OCI-LY7 (cell line): ENCODE measurements at regions of chr1 and their contacts with region 1.

Region 1: DNA sequence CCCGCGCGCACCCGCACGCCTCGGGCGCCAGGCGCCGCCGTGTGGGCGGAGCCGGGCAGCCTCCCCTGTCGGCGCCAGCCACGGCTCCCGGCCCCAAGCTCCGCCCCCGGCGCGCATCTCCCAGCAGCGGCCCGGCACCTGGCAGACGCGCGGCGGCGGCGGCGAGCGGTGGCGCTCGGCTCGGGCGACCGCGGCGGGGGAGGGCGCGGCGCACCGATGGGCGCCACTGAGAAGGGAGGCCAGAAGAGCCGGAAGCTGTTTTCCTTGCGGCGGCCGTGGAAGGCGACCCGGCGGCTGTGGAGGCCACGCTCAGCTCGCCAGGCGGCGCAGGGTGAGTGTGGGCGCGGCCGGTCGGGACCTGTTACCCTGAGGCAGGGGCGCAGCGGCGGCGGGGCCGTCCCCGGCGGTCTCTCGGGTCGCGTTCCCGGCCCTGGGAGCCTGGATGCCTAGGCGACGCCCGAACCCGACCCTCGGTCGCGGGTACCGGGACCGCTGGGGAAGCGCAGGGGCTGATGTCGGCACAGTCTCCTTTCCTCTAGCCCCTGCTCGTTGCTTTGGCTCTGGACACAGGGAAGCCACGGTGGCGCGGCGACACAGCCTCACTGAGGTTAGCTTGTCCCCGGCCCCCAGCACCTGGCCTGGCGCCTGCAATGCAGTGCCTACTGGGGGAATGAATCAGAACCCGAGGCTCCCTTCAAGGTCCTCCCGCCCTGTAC is 54.9 kb upstream of the DNAJC6 start:
- DNase-seq: peak; percentile 91
- H3K4me3 ChIP-seq: peak overlapping the region; percentile 86
- H3K27ac ChIP-seq: peak overlapping the region; percentile 47
- H3K4me1 ChIP-seq: peaks cover 21% of the 10 kb centered on the region
- CTCF ChIP-seq: 0 out of 2 replicates have a peak, but pooled peaks have one; percentile 11

Region 2: DNA sequence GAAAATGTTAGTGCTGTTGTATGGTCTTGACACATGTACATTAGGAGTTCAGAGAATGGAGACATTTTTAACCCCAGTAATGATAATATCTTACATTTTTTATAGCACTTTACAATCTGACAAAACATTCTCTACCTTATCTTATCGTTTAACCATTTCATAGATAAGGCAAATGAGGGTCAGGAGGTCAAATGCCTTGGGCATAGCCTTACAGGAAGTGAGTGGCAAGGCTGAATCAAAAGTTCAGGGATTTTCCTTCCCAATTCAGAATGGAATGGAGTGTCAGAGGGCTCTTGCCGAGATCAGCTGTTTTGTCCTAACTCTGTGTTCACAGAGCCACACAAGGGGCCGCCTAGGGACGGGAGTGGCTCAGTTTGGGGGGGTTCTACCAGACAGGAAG is 164.1 kb before region 1 on chr1:
- CTCF ChIA-PET with region 1: no interaction called
- POLR2A ChIA-PET with region 1: no interaction called
- intact Hi-C with region 1: no loop called
- DNase-seq: no peak
- H3K4me3 ChIP-seq: no peak overlapping the region
- H3K27ac ChIP-seq: no peak overlapping the region
- H3K4me1 ChIP-seq: no peaks in the 10 kb centered on the region
- CTCF ChIP-seq: no peak

Region 3: GRCh38 chr1:65174585-65174984 is 79.9 kb before region 1 on chr1:
- CTCF ChIA-PET with region 1: no interaction called
- POLR2A ChIA-PET with region 1: no interaction called
- intact Hi-C with region 1: no loop called
- DNase-seq: no peak
- H3K4me3 ChIP-seq: no peak overlapping the region
- H3K27ac ChIP-seq: no peak overlapping the region
- H3K4me1 ChIP-seq: no peaks in the 10 kb centered on the region
- CTCF ChIP-seq: no peak

Region 4: GRCh38 chr1:65281846-65282245 is 27.4 kb after region 1 on chr1:
- CTCF ChIA-PET with region 1: no interaction called
- POLR2A ChIA-PET with region 1: interaction called, 3 read pairs
- intact Hi-C with region 1: loop called (anchors 2 kb)
- DNase-seq: peak; percentile 79
- H3K4me3 ChIP-seq: peak overlapping the region; percentile 34
- H3K27ac ChIP-seq: peak overlapping the region; percentile 76
- H3K4me1 ChIP-seq: peaks cover 60% of the 10 kb centered on the region
- CTCF ChIP-seq: no peak

Region 5: DNA sequence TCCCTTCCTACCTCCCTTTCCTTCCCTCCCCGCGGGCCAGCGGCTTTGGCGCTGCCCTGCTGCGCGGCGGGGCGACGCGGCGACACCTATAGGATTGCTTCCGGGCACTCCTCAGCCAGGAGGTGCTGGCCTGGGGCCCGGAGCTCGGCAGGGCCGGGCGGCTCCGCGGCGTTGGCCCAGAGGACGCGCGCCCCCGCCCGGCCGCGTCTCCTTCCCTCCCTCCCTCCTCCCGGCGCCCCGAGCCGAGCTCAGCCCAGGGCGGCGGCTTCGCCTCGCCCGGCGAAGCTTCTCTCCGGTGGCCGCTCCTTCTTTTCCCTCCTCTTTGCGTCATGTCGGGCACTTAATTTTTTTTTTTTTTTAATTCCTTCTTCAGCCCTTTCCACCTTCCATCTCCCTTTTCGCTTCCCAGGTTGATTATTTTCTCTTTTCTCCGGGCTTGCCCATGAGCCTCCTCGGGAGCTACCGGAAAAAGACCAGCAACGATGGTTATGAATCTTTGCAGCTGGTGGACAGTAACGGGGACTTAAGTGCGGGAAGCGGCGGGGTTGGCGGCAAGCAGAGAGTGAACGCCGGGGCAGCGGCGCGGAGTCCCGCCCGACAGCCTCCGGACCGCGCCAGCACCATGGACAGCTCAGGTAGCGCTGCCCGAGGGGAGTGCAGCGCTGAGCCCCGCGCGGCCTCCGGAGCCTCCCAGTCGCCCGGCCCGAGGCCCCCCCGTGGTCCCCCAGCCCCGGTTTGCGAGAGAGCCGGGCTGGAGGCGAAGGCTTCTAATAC is 55.0 kb after region 1 on chr1 and contains the start of gene DNAJC6:
- CTCF ChIA-PET with region 1: no interaction called
- POLR2A ChIA-PET with region 1: no interaction called
- intact Hi-C with region 1: loop called (anchors 5 kb)
- DNase-seq: no peak
- H3K4me3 ChIP-seq: no peak within 1 kb of the TSS
- H3K27ac ChIP-seq: no peak within 1 kb of the TSS
- H3K4me1 ChIP-seq: no peaks in the 10 kb centered on the region
- CTCF ChIP-seq: no peak
- total RNA-seq, gene DNAJC6: 6.6 and 10.3 TPM in 2 replicates

Region 6: DNA sequence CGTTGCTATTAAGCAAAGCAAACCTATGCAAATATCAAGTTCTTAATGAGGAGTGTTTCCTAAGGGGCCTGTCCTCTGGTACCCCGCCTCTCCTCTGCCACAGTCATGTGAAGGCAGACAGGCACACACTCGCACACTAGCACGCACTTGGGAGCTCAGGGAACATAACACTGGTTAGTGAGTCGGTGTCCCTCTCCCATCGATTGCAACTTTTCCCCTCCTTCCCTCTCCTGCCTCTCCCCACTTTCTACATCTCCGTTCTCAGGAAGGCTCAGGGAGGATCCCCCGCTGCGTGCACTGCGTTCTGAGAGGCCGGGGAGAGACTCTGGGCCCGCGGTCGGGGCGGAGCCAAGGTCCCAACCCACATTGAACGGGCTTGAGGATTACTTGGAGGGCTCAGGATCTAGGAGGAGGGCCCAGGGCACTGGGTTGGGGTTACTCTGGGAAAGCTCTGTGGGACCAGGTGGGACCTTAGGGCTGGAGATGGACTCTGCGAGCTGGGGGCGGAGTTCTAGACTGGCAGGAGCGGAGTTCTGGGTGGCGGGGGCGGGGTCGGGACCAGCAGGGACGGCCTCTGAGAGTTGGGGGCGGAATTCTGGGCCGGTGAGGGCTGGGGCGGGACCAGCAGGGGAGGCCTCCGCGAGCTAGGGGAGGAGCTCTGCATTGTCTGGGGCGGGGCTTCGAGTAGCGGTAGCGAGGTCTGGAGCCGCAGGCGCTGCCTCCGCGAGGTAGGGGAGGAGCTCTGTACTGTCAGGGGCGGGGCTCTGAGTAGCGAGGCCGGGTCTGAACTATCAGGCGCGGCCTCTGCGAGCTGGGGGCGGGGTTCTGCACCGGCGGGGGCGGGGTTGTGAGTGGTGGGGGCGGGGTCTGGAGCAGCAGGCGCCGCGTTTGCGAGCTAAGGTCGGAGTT is 165.5 kb after region 1 on chr1:
- CTCF ChIA-PET with region 1: no interaction called
- POLR2A ChIA-PET with region 1: interaction called, 5 read pairs
- intact Hi-C with region 1: loop called (anchors 1 kb)
- DNase-seq: peak; percentile 97
- H3K4me3 ChIP-seq: peak overlapping the region; percentile 92
- H3K27ac ChIP-seq: peak overlapping the region; percentile 63
- H3K4me1 ChIP-seq: peaks cover 20% of the 10 kb centered on the region
- CTCF ChIP-seq: no peak